Uterus (tissue), 4 donors: ENCODE measurements at regions of chr11 and their contacts with region 1.

Region 1: DNA sequence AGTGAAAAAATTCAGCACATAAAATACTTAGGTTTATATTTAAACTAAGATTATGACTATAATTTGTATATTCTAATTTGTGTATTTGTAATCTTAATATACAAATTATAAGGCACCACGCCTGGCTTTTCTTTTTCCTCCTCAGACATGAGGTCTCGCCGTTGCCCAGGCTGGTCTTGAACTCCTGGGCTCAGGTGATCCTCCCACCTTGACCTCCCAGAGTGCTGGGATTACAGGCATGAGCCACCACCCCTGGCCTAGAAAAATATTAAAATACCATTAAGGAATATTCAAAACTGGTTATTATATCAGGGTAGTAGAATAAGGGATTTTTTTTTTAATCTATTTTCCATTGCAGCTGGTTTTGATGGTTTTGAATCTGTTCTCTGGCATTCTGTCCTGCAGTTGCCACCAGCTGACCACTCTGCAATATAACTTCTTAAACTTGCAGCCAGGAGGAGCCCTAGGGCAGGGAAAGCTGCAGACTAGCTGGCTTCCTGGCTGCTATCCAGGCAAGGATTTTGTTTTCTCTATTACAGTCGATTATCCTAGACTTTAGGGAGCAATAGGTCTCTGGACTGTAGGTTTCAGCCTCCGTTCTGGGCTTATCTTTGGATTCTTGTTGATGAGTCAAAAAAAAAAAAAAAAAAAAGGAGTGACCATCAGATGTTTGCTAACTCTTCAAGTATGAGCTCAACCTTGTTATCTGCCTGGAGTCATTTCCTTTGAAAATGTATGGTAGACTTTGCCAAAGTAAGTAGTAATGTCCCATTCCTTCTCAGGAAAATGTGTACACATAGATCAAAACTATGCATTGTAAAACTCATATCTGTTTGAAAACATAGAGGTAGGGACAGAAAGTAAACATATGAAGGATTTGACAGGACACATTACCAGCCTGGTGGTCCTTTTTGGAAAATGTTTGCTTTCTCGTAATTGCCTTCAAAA is 13.2 kb downstream of the POLA2 start:
- DNase-seq: peak; percentile 83 to 93
- H3K4me3 ChIP-seq: no peak overlapping the region
- H3K27ac ChIP-seq: peak overlapping the region; percentile 64 to 66
- H3K4me1 ChIP-seq: peaks cover 0 to 16% of the 10 kb centered on the region in 2 donors
- H3K27me3 ChIP-seq: no peaks in the 10 kb centered on the region
- CTCF ChIP-seq: peak; percentile 82 to 99 (median 90)
- POLR2A ChIP-seq: no peak

Region 2: GRCh38 chr11:65110354-65110861 is 164.6 kb before region 1 on chr11:
- intact Hi-C with region 1: no loop called
- DNase-seq: peak; percentile 87 to 88
- H3K4me3 ChIP-seq: no peak overlapping the region
- H3K27ac ChIP-seq: peak overlapping the region in 1 of 2 donors; percentile 44
- H3K4me1 ChIP-seq: peaks cover 3 to 16% of the 10 kb centered on the region in 2 donors
- H3K27me3 ChIP-seq: no peaks in the 10 kb centered on the region
- CTCF ChIP-seq: peak; percentile 96 to 99 (median 98)
- POLR2A ChIP-seq: no peak

Region 3: GRCh38 chr11:65314501-65315203 is 39.6 kb after region 1 on chr11 and contains the start of gene CDC42EP2:
- intact Hi-C with region 1: loop called (anchors 2 kb)
- DNase-seq: peak; percentile 86 to 93
- H3K4me3 ChIP-seq: peak within 1 kb of the TSS; percentile 91 to 99
- H3K27ac ChIP-seq: peak within 1 kb of the TSS; percentile 91 to 94
- H3K4me1 ChIP-seq: no peaks in the 10 kb centered on the region
- H3K27me3 ChIP-seq: no peaks in the 10 kb centered on the region
- CTCF ChIP-seq: peak in 3 of 4 experiments; percentile 3 to 57 (median 7)
- POLR2A ChIP-seq: peak; percentile 88 to 93
- total RNA-seq, gene CDC42EP2: 9.7 to 65.3 (median 33.2) TPM